PC-9 (cell line): ENCODE measurements at regions of chr7 and their contacts with region 1.

Region 1: DNA sequence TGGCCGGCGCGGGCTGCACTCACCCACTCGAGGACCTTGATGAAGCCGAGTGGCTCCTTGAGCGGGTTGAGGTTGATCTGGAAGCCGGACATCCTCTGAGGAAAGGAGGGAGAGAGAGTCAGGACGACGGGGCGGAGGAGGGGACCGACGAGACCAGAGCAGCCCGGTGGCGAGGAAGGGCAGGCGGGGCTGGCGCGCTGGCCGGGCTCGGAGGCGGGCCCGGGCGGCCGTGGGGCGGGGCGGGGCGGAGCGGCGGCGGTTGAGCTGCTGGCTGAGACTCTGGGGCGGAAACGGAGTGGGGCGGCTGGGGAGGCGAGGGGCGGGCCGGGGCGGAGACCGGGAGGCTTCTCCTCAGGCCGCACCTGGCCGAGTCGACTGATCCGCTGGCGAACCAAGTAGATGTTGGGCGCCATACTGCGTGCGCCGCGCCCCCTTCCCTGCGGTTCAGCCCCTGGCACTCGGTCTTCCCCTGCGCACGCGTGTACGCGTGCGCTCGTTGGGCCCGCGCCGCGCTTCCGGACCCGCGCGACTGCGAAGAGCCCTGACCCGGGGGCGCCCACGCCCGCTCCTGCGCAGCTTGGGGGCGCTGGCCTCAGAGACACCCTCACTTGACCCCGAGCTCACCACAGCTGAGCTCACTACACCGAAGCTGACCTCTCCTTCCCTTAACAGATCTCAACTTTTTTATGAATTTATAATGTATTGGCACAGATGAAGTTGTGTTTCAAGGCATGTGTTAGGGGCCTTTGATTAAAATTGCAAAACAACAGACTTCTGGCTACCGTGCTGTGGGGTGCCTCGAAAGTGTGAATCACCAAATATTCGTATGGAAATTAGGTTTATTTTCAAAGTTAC is at the start of gene SYPL1:
- DNase-seq: peak; percentile 80 to 97
- H3K4me3 ChIP-seq: peak within 1 kb of the TSS; percentile 88
- H3K27ac ChIP-seq: peak within 1 kb of the TSS; percentile 86
- H3K4me1 ChIP-seq: peaks cover 43% of the 10 kb centered on the region
- H3K27me3 ChIP-seq: no peaks in the 10 kb centered on the region
- CTCF ChIP-seq: no peak
- total RNA-seq, gene SYPL1: 83.9 and 102 TPM in 2 replicates

Region 2: DNA sequence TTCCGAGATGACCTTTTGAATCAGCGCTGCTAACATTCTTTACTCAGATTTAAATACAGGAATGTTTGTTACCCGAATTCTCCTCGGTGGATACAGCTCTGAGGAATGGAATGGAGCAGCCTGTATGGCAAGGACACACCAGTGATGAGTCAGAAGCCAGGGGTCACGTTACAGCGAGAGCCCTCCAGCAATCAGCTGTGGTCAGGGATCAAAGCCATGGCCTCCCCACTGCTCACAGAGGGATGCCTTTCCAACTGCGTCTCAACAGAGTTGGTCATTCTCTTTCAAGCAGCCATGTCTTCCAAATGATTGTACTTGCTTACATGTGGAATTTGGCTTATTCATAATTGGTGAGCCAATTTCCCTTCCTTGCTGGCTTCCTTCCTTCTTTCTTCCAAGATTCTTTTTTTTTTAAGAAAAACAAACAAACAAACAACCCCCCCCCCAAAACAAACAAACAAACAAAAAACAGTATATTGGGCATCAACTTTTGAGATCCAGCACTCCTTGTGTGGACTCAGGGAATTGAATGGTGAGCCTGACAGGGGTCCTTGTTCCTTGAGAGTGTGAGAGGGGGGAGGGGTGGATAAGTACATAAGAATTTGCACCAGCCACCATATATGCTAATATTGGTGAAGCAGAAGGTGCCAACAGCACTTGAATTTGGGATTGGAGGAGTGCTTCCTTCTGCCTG is 336.1 kb before region 1 on chr7:
- CTCF ChIA-PET with region 1: no interaction called
- POLR2A ChIA-PET with region 1: no interaction called
- intact Hi-C with region 1: loop called (anchors 5 kb)
- DNase-seq: peak; percentile 96 to 99
- H3K4me3 ChIP-seq: no peak overlapping the region
- H3K27ac ChIP-seq: peak overlapping the region; percentile 87
- H3K4me1 ChIP-seq: peaks cover 33% of the 10 kb centered on the region
- H3K27me3 ChIP-seq: no peaks in the 10 kb centered on the region
- CTCF ChIP-seq: no peak

Region 3: GRCh38 chr7:106064771-106065585 is 47.4 kb before region 1 on chr7:
- CTCF ChIA-PET with region 1: no interaction called
- POLR2A ChIA-PET with region 1: interaction called, 14 read pairs
- intact Hi-C with region 1: loop called (anchors 2 kb)
- DNase-seq: peak; percentile 93 to 97
- H3K4me3 ChIP-seq: peak overlapping the region; percentile 63
- H3K27ac ChIP-seq: peak overlapping the region; percentile 98
- H3K4me1 ChIP-seq: peaks cover 85% of the 10 kb centered on the region
- H3K27me3 ChIP-seq: no peaks in the 10 kb centered on the region
- CTCF ChIP-seq: no peak

Region 4: DNA sequence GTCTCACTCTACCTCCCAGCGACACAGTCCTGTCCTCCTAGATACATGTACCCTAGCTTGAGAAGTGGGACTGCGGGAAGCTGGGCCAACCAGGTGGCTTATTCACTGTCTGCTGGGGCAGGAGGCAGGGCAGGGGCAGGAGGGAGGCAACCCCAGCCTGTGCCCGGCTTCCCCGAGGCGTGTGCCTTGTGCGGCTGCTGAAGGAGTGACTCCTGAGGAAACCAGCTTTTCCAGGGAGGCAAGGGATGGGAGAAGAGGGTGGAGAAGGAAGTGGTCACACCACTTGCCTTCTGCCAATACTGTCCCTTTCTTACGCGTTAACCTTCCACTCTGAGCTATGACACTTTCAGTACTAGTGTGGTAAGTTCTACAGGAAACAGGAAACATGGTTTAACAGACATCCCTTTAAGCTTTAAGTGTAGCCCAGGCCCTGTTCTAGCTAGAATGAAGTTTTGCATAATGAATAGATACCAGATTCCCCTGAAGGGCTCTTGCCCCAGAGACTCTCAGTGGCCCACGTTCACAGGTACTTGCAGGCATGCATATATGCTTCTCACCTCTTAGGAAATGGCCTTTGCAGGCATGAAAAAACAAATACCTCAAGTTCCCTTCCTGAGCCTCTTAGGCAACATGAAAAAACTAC is 40.9 kb before region 1 on chr7:
- CTCF ChIA-PET with region 1: no interaction called
- POLR2A ChIA-PET with region 1: interaction called, 13 read pairs
- intact Hi-C with region 1: loop called (anchors 2 kb)
- DNase-seq: peak; percentile 87 to 93
- H3K4me3 ChIP-seq: peak overlapping the region; percentile 24; the same call in 1 of the 2 replicates
- H3K27ac ChIP-seq: peak overlapping the region; percentile 95
- H3K4me1 ChIP-seq: peaks cover 61% of the 10 kb centered on the region
- H3K27me3 ChIP-seq: no peaks in the 10 kb centered on the region
- CTCF ChIP-seq: no peak

Region 5: GRCh38 chr7:106127984-106128780 is 15.8 kb after region 1 on chr7:
- CTCF ChIA-PET with region 1: no interaction called
- POLR2A ChIA-PET with region 1: interaction called, 11 read pairs
- intact Hi-C with region 1: no loop called
- DNase-seq: no peak
- H3K4me3 ChIP-seq: no peak overlapping the region
- H3K27ac ChIP-seq: no peak overlapping the region
- H3K4me1 ChIP-seq: peaks cover 18% of the 10 kb centered on the region
- H3K27me3 ChIP-seq: no peaks in the 10 kb centered on the region
- CTCF ChIP-seq: no peak

Region 6: GRCh38 chr7:106153891-106154449 is 41.6 kb after region 1 on chr7:
- CTCF ChIA-PET with region 1: interaction called, 3 read pairs
- POLR2A ChIA-PET with region 1: no interaction called
- intact Hi-C with region 1: loop called (anchors 1 kb)
- DNase-seq: peak; percentile 68 to 89
- H3K4me3 ChIP-seq: no peak overlapping the region
- H3K27ac ChIP-seq: no peak overlapping the region
- H3K4me1 ChIP-seq: peaks cover 12% of the 10 kb centered on the region
- H3K27me3 ChIP-seq: no peaks in the 10 kb centered on the region
- CTCF ChIP-seq: peak; percentile 94

Region 7: DNA sequence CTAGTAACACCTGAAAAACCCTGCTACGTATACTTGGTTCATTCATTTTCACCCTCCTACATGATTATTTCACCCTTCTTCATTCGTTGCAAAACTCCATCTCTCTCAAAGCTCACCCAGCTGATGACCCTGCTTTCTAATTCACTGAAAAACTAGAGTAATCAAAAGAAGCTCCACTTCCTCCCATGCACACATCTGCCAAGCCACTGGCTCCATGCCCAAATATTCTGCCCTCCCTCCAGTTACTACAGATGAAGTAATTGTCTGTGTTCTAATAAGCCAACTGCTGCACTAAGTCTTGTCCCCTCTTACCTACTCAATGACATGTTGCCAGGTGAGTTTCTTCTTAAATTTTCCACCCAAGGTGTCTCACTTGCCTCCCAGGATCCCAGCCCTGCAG is 645.5 kb after region 1 on chr7:
- CTCF ChIA-PET with region 1: no interaction called
- POLR2A ChIA-PET with region 1: interaction called, 11 read pairs
- intact Hi-C with region 1: no loop called
- DNase-seq: no peak
- H3K4me3 ChIP-seq: no peak overlapping the region
- H3K27ac ChIP-seq: no peak overlapping the region
- H3K4me1 ChIP-seq: no peaks in the 10 kb centered on the region; the same call in 1 of the 2 replicates
- H3K27me3 ChIP-seq: no peaks in the 10 kb centered on the region
- CTCF ChIP-seq: no peak